SK-N-SH (cell line): ENCODE measurements at regions of chr17 and their contacts with region 1.

Region 1: GRCh38 chr17:27760069-27760885 is 40.1 kb downstream of the NOS2 start:
- DNase-seq: peak; percentile 77
- H3K4me3 ChIP-seq: no peak overlapping the region; a peak in 1 of 4 replicates
- H3K27ac ChIP-seq: no peak overlapping the region
- H3K4me1 ChIP-seq: no peaks in the 10 kb centered on the region
- H3K27me3 ChIP-seq: no peaks in the 10 kb centered on the region
- CTCF ChIP-seq: peak; percentile 86
- EP300 ChIP-seq: no peak
- RAD21 ChIP-seq: peak; percentile 65

Region 2: DNA sequence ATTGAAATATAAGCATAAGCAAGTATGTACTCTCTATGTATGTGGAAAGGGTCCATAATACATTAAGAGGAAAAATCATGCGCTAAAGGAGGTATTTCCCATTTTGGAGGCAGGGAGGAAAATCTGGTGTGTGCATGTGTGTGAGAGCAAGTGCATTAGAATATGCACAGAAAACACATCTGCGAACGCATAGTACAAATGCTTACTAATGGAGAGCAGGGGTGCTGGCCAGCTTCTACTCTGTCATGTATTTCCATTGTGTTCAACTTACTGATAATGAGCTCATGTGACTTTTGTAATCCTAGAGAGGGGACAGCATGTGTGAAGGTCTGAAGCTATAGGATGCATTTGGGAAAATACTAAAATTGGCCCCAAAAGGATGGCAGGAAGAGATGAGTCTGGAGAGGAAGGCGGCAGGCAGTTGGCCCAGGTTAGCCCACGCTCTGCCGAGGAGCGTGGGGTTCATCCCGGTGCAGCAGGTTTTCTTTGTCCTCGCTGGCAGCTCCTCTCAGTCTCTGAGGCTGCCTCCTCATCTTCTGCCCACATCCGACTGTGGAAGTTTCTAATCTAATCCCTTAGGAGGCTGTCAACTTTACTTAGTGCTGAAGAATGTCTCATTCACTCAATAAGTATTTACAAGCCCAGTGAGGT is 321.8 kb before region 1 on chr17:
- CTCF ChIA-PET with region 1: no interaction called
- POLR2A ChIA-PET with region 1: no interaction called
- DNase-seq: no peak
- H3K4me3 ChIP-seq: no peak overlapping the region
- H3K27ac ChIP-seq: no peak overlapping the region
- H3K4me1 ChIP-seq: no peaks in the 10 kb centered on the region
- H3K27me3 ChIP-seq: no peaks in the 10 kb centered on the region
- CTCF ChIP-seq: no peak
- EP300 ChIP-seq: no peak
- RAD21 ChIP-seq: no peak

Region 3: DNA sequence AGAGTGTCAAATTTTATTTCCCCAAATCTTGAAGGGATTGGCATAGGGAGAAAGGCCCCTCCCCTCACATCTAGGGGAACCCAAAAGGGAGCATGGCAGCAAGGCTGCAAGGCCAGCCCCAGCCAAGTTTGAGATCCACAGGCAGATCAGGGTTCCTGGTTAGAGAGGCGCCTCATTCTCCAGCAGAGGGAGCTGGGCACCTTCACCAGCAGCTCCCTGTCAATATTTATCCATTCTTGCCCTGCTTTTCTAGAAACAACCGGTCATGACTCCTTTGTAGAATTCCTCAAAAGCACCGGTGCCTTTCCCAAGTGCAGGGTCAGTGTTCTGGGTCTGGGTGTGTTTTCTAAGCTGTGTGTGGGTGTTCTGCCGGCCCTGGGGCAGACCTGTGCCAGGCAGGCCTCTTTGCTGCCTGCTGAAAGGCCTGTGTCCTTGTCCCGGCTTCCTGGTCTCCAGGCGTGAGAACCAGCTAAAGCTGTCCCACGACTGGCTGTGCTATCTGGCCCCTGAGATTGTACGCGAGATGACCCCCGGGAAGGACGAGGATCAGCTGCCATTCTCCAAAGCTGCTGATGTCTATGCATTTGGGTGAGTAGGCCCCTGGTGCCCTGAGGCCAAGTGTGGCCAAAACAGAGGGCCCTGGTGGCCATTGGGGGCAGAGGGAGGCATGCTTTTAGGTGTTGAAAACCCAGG is 150.5 kb before region 1 on chr17:
- CTCF ChIA-PET with region 1: interaction called, 10 read pairs
- POLR2A ChIA-PET with region 1: no interaction called
- DNase-seq: peak; percentile 61
- H3K4me3 ChIP-seq: no peak overlapping the region
- H3K27ac ChIP-seq: no peak overlapping the region
- H3K4me1 ChIP-seq: no peaks in the 10 kb centered on the region; a peak in 1 of 4 replicates
- H3K27me3 ChIP-seq: no peaks in the 10 kb centered on the region
- CTCF ChIP-seq: peak; percentile 49
- EP300 ChIP-seq: no peak
- RAD21 ChIP-seq: peak; percentile 63

Region 4: GRCh38 chr17:27741361-27741861 is 18.9 kb before region 1 on chr17:
- CTCF ChIA-PET with region 1: interaction called, 21 read pairs
- POLR2A ChIA-PET with region 1: no interaction called
- DNase-seq: no peak
- H3K4me3 ChIP-seq: no peak overlapping the region
- H3K27ac ChIP-seq: no peak overlapping the region
- H3K4me1 ChIP-seq: no peaks in the 10 kb centered on the region
- H3K27me3 ChIP-seq: no peaks in the 10 kb centered on the region; the same call in 1 of the 2 replicates
- CTCF ChIP-seq: no peak
- EP300 ChIP-seq: no peak
- RAD21 ChIP-seq: no peak

Region 5: DNA sequence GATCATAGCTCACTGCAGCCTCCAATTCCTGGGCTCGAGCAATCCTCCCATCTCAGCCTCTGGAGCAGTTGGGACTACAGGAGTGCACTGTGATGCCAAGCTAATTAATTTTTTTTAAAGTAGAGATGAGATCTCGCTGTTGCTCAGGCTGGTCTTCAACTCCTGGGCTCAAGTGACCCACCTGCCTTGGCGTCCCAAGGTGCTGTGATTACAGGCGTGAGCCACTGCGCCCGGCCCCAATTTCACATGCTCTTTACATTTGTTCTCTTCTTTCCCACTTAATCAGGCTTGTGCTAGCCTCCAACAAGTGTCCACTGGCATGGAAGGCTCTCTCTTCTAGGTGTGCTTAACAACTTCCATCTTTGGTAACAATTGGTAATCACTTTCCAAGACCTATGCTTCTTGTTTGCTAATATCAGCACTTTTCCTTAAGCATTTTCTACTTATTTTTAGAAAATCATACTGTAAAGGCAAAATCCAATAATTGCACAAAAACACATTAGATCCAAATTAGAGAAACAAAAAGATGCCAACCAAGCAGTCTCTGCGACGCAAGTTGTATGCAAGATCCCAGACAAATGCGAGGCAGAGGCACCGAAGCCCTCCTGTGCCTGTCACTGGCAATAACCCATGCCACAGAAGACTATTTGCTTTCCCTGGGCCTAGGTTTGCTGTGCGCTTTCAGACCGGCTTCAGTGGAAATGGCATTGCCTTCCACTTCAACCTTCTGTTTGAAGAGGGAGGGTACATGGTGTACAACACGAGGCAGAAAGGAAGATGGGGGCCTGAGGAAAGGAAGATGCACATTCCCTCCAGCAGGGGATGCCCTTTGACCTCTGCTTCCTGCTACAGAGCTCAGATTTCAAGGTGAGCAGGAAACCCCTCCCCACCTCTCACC is 12.6 kb before region 1 on chr17:
- CTCF ChIA-PET with region 1: interaction called, 11 read pairs
- POLR2A ChIA-PET with region 1: no interaction called
- DNase-seq: no peak
- H3K4me3 ChIP-seq: no peak overlapping the region; a peak in 1 of 4 replicates
- H3K27ac ChIP-seq: no peak overlapping the region
- H3K4me1 ChIP-seq: no peaks in the 10 kb centered on the region
- H3K27me3 ChIP-seq: no peaks in the 10 kb centered on the region; the same call in 1 of the 2 replicates
- CTCF ChIP-seq: peak; percentile 34; the same call in 1 of the 2 replicates
- EP300 ChIP-seq: no peak
- RAD21 ChIP-seq: no peak

Region 6: DNA sequence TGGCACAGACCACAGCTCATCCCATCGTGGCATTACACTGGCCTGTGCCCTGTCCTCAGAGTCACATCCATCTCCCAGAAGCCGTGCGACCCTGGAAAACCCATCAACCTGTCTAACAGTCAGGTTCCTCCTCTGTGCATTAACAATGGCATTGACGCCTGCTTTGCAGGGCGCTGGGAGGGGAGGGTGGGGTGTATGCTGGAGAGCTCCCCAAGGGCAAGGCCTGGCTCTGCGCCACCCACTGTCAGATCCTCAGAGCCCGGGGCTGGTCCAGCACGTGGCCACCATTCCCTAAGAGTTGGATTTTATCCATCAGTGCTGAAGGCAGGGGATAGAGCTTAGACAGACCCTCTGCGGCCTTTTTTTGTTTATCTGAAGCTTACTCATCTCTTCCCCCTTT is 11.3 kb after region 1 on chr17:
- CTCF ChIA-PET with region 1: interaction called, 22 read pairs
- POLR2A ChIA-PET with region 1: no interaction called
- DNase-seq: no peak
- H3K4me3 ChIP-seq: no peak overlapping the region
- H3K27ac ChIP-seq: no peak overlapping the region
- H3K4me1 ChIP-seq: no peaks in the 10 kb centered on the region; a peak in 1 of 4 replicates
- H3K27me3 ChIP-seq: no peaks in the 10 kb centered on the region
- CTCF ChIP-seq: no peak
- EP300 ChIP-seq: no peak
- RAD21 ChIP-seq: no peak

Region 7: GRCh38 chr17:27778193-27778592 is 17.9 kb after region 1 on chr17:
- CTCF ChIA-PET with region 1: interaction called, 18 read pairs
- POLR2A ChIA-PET with region 1: no interaction called
- DNase-seq: no peak
- H3K4me3 ChIP-seq: no peak overlapping the region
- H3K27ac ChIP-seq: no peak overlapping the region
- H3K4me1 ChIP-seq: peaks cover 0 to 3% of the 10 kb centered on the region in 2 experiments; a peak in 1 of 4 replicates
- H3K27me3 ChIP-seq: no peaks in the 10 kb centered on the region
- CTCF ChIP-seq: no peak
- EP300 ChIP-seq: no peak
- RAD21 ChIP-seq: no peak

Region 8: GRCh38 chr17:27892866-27893769 is 132.8 kb after region 1 on chr17 and contains the start of gene LYRM9:
- CTCF ChIA-PET with region 1: interaction called, 289 read pairs
- POLR2A ChIA-PET with region 1: no interaction called
- DNase-seq: peak; percentile 98
- H3K4me3 ChIP-seq: peak within 1 kb of the TSS; percentile 63 to 70
- H3K27ac ChIP-seq: peak within 1 kb of the TSS; percentile 41 to 77; a peak in 2 of 4 replicates
- H3K4me1 ChIP-seq: peaks cover 0 to 5% of the 10 kb centered on the region in 2 experiments; a peak in 2 of 4 replicates
- H3K27me3 ChIP-seq: no peaks in the 10 kb centered on the region
- CTCF ChIP-seq: peak; percentile 91
- EP300 ChIP-seq: no peak
- RAD21 ChIP-seq: peak; percentile 44
- polyA plus RNA-seq, gene LYRM9: 4.6 and 5.7 TPM in 2 replicates